Tibial artery (tissue), 4 donors: ENCODE measurements at regions of chr14 and their contacts with region 1.

Region 1: GRCh38 chr14:99628832-99629618 is 15.9 kb upstream of the HHIPL1 start:
- DNase-seq: peak; percentile 61 to 83
- H3K4me3 ChIP-seq: no peak overlapping the region
- H3K27ac ChIP-seq: no peak overlapping the region
- H3K4me1 ChIP-seq: peaks cover 0 to 7% (median 3%) of the 10 kb centered on the region in 4 donors
- H3K27me3 ChIP-seq: peaks cover 0 to 23% of the 10 kb centered on the region in 2 donors
- CTCF ChIP-seq: peak; percentile 95

Region 2: GRCh38 chr14:99164712-99165111 is 464.3 kb before region 1 on chr14:
- intact Hi-C with region 1: no loop called
- DNase-seq: no peak
- H3K4me3 ChIP-seq: no peak overlapping the region
- H3K27ac ChIP-seq: no peak overlapping the region
- H3K4me1 ChIP-seq: no peaks in the 10 kb centered on the region
- H3K27me3 ChIP-seq: peaks cover 0 to 17% of the 10 kb centered on the region in 2 donors
- CTCF ChIP-seq: no peak

Region 3: DNA sequence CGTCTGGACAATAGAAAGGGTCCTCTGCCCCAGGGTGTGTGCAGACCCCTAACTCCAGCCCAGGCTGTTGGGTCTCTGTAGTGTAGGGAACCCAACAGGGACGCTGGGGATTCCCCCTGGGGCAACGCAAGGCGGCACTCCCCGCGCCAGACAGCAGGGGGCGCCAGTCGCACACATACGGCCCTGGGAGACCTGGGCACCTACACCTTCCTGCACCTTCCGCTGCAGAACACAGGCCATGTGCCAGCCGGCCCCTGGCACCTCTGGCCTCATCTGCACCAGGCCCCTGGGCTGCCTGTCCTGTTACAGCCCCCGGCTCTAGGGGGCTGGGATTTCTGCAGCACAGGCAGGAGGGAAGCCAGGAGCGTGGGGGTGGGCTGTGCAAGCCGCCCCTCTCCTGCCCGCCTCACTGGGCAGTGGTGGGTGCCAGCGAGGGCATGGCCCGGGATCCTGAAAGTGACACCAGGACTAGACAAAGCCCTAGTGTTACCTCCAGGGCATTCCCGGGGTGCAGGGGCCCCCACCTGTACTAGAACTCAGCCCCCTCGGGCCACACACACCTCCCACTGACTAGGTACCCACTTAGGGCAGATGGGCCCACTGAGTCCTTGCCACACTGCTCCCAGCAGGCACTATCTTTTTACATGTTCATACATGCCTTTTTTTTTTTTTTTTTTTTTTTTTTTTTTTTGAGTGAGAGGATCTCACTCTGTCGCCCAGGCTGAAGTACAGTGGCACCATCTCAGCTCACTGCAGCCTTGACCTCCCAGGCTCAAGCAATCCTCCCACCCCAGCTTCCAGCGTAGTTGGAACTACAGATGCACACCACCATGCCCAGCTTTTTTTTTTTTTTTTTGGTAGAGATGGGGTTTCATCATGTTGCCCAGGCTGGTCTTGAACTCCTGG is 110.3 kb before region 1 on chr14:
- intact Hi-C with region 1: loop called (anchors 2 kb)
- DNase-seq: peak; percentile 40 to 76
- H3K4me3 ChIP-seq: no peak overlapping the region
- H3K27ac ChIP-seq: no peak overlapping the region
- H3K4me1 ChIP-seq: peaks cover 0 to 21% (median 0%) of the 10 kb centered on the region in 4 donors
- H3K27me3 ChIP-seq: no peaks in the 10 kb centered on the region
- CTCF ChIP-seq: peak; percentile 87 to 92

Region 4: GRCh38 chr14:99531251-99532096 is 97.6 kb before region 1 on chr14:
- intact Hi-C with region 1: no loop called
- DNase-seq: no peak
- H3K4me3 ChIP-seq: no peak overlapping the region
- H3K27ac ChIP-seq: no peak overlapping the region
- H3K4me1 ChIP-seq: peaks cover 0 to 11% (median 4%) of the 10 kb centered on the region in 4 donors
- H3K27me3 ChIP-seq: no peaks in the 10 kb centered on the region
- CTCF ChIP-seq: no peak

Region 5: DNA sequence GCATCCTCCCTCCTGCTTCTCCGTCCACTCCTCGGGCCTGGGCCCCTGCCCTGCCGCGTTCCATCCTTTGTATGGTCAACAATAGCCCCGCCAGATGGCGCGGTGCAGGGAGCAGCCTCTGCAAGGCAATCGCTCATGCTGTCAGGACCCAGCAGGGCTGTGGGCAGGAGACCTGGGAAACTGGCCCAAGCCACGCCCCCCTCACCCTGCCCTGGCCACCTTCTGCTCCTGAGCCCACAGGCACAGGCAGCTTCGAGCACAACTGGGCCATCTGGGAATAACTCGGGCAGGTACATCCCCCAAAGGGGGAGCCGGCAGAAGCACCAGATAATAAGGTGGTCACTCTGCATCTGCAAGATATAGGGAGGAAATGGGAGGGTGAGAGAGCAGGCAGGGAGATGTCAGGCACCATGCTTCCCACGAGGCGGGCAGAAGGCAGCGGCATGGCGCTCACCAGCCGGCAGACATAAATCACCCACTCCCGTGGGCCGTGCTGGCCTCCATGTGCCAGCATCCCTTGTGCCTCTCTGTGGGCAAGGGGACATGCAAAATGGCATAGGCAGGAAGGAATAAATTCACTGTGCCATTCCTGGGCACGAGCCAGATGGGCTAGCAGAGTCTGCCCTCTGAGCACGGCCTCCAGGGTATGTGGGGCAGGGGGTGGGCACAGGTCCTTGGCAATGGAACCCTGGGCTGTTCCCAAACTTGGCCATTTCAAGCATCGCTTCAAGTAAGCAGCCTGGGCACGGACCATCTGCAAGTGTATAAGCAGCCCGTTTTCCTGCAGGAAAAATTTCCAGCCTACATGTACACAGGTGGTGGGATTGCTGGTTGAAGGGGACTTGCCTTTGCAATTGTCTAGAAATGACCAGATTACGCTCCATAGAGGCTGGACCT is 65.5 kb before region 1 on chr14:
- intact Hi-C with region 1: loop called (anchors 5 kb)
- DNase-seq: peak in 1 of 2 donors; percentile 84
- H3K4me3 ChIP-seq: no peak overlapping the region
- H3K27ac ChIP-seq: peak overlapping the region in 1 of 2 donors; percentile 16
- H3K4me1 ChIP-seq: peaks cover 0 to 68% (median 41%) of the 10 kb centered on the region in 4 donors
- H3K27me3 ChIP-seq: no peaks in the 10 kb centered on the region
- CTCF ChIP-seq: peak; percentile 28 to 38

Region 6: GRCh38 chr14:99654235-99654966 is 25.4 kb after region 1 on chr14:
- intact Hi-C with region 1: no loop called
- DNase-seq: peak; percentile 48 to 79
- H3K4me3 ChIP-seq: no peak overlapping the region
- H3K27ac ChIP-seq: no peak overlapping the region
- H3K4me1 ChIP-seq: peaks cover 0 to 2% (median under 1%) of the 10 kb centered on the region in 4 donors
- H3K27me3 ChIP-seq: peaks cover 0 to 16% of the 10 kb centered on the region in 2 donors
- CTCF ChIP-seq: no peak